T-cell (primary cell): ENCODE measurements at regions of chr4 and their contacts with region 1.

Region 1: GRCh38 chr4:39970671-39971640 is 6.8 kb downstream of the PDS5A start:
- DNase-seq: no peak
- ATAC-seq: no peak
- H3K4me3 ChIP-seq: no peak overlapping the region
- H3K4me3 Mint-ChIP-seq: peak overlapping the region in 2 of 3 donors; percentile 9 to 63
- H3K27ac ChIP-seq: no peak overlapping the region
- H3K27ac Mint-ChIP-seq: no peak overlapping the region
- H3K4me1 ChIP-seq: peaks cover 18 to 41% of the 10 kb centered on the region in 2 experiments
- H3K4me1 Mint-ChIP-seq: peaks cover 56 to 70% (median 65%) of the 10 kb centered on the region in 3 donors
- H3K27me3 ChIP-seq: no peaks in the 10 kb centered on the region
- H3K27me3 Mint-ChIP-seq: no peaks in the 10 kb centered on the region

Region 2: GRCh38 chr4:39295784-39296183 is 675.2 kb before region 1 on chr4:
- CTCF ChIA-PET with region 1: no interaction called
- POLR2A ChIA-PET with region 1: interaction called in 1 of 2 experiments, 12 read pairs
- DNase-seq: no peak
- ATAC-seq: no peak
- H3K4me3 ChIP-seq: no peak overlapping the region
- H3K4me3 Mint-ChIP-seq: no peak overlapping the region
- H3K27ac ChIP-seq: no peak overlapping the region
- H3K27ac Mint-ChIP-seq: no peak overlapping the region
- H3K4me1 ChIP-seq: no peaks in the 10 kb centered on the region
- H3K4me1 Mint-ChIP-seq: no peaks in the 10 kb centered on the region
- H3K27me3 ChIP-seq: no peaks in the 10 kb centered on the region
- H3K27me3 Mint-ChIP-seq: no peaks in the 10 kb centered on the region

Region 3: GRCh38 chr4:39697740-39698423 is 273.1 kb before region 1 on chr4 and contains the start of gene UBE2K:
- CTCF ChIA-PET with region 1: interaction called, 5 to 16 read pairs
- POLR2A ChIA-PET with region 1: no interaction called
- DNase-seq: peak; percentile 76 to 93 (median 84)
- ATAC-seq: peak; percentile 91 to 93 (median 92)
- H3K4me3 ChIP-seq: peak within 1 kb of the TSS; percentile 91 to 100
- H3K4me3 Mint-ChIP-seq: peak within 1 kb of the TSS; percentile 96 to 98 (median 97)
- H3K27ac ChIP-seq: peak within 1 kb of the TSS; percentile 90
- H3K27ac Mint-ChIP-seq: peak within 1 kb of the TSS; percentile 96 to 97
- H3K4me1 ChIP-seq: peaks cover 16 to 25% of the 10 kb centered on the region in 2 experiments
- H3K4me1 Mint-ChIP-seq: peaks cover 43 to 52% (median 49%) of the 10 kb centered on the region in 3 donors
- H3K27me3 ChIP-seq: no peaks in the 10 kb centered on the region
- H3K27me3 Mint-ChIP-seq: no peaks in the 10 kb centered on the region
- total RNA-seq, gene UBE2K: 32.5 to 46.9 (median 44.0) TPM

Region 4: DNA sequence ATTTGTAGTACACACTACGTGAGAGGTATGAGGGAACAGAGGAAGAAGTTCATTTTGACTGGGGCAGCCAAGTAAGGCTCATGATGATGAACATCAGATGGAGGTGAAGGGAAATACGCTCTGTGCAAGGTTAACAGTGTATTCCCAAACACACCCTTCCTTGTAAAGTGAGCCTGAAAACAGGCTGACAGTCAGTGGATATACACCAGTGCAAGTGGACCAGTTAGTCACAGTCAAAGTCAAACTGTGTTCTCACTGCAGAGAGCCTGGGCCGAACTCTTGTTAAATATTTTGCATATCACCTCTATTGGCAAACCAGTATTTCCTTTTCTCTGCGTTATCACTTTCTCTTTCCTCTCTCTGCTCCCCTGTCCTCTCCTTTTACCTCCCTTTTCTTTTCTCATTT is 202.5 kb after region 1 on chr4:
- CTCF ChIA-PET with region 1: no interaction called
- POLR2A ChIA-PET with region 1: no interaction called
- DNase-seq: peak in 1 of 35 experiments; percentile 19
- ATAC-seq: peak; percentile 51 to 57 (median 54)
- H3K4me3 ChIP-seq: no peak overlapping the region
- H3K4me3 Mint-ChIP-seq: peak overlapping the region; percentile 31 to 43 (median 39)
- H3K27ac ChIP-seq: peak overlapping the region; percentile 22
- H3K27ac Mint-ChIP-seq: peak overlapping the region; percentile 90 to 92
- H3K4me1 ChIP-seq: peaks cover 5 to 9% of the 10 kb centered on the region in 2 experiments
- H3K4me1 Mint-ChIP-seq: peaks cover 17 to 32% (median 29%) of the 10 kb centered on the region in 3 donors
- H3K27me3 ChIP-seq: no peaks in the 10 kb centered on the region
- H3K27me3 Mint-ChIP-seq: no peaks in the 10 kb centered on the region

Region 5: DNA sequence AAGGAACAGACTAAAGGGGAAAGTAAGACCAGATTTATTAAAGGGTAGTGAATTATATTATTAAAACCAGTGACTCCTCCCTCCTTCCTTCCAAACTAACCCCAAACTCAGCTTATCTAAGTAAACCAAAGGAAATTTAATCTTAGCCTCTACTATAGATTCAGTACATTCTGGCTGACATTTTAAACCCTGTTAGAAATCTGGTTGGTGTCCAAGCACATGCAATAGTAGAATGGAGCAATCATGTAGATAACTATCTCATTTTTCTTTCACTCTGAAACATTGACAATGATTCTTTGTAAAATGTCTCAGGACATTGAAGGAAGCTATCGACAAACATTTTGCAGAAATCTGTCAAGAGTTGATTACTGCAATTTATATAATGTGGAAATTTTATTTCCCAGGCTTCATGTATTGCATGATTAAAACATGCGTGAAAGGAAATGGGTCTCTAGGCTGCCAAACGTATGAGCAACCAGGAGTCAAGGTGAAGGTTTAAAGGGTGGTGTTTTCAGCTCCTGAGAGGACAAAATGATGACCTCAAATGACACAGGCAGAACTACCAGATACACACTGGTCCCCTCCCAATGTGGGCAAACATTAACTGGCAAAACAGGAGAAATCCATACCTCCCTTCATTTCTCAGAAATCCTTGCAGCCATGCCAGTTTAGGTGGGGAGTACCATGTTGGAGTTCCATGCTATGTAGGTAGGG is 716.9 kb after region 1 on chr4:
- CTCF ChIA-PET with region 1: no interaction called
- POLR2A ChIA-PET with region 1: no interaction called
- DNase-seq: no peak
- ATAC-seq: no peak
- H3K4me3 ChIP-seq: no peak overlapping the region
- H3K4me3 Mint-ChIP-seq: no peak overlapping the region
- H3K27ac ChIP-seq: no peak overlapping the region
- H3K27ac Mint-ChIP-seq: no peak overlapping the region
- H3K4me1 ChIP-seq: no peaks in the 10 kb centered on the region
- H3K4me1 Mint-ChIP-seq: peaks cover 0 to 4% (median 2%) of the 10 kb centered on the region in 3 donors
- H3K27me3 ChIP-seq: peaks cover 0 to 3% of the 10 kb centered on the region in 2 experiments
- H3K27me3 Mint-ChIP-seq: no peaks in the 10 kb centered on the region